ENCODE measurements at regions of chr6 and their contacts with region 1.

Region 1: GRCh38 chr6:27838058-27838944 is 73.9 kb downstream of the OR2B2 start:
- DNase-seq: peak; percentile 61 to 98 (median 74)
- ATAC-seq: peak; percentile 70
- H3K4me3 ChIP-seq: peak overlapping the region; percentile 64 to 76
- H3K4me3 Mint-ChIP-seq: no peak overlapping the region
- H3K27ac ChIP-seq: peak overlapping the region; percentile 91 to 98
- H3K27ac Mint-ChIP-seq: no peak overlapping the region
- H3K4me1 ChIP-seq: peaks cover 35% of the 10 kb centered on the region
- H3K4me1 Mint-ChIP-seq: peaks cover 21% of the 10 kb centered on the region
- H3K27me3 ChIP-seq: peaks cover 0 to 4% of the 10 kb centered on the region in 2 experiments
- H3K27me3 Mint-ChIP-seq: peaks cover 7% of the 10 kb centered on the region
- CTCF ChIP-seq: no peak

Region 2: GRCh38 chr6:26045065-26045927 is 1793.0 kb before region 1 on chr6:
- CTCF ChIA-PET with region 1: no interaction called
- POLR2A ChIA-PET with region 1: interaction called, 15 read pairs
- intact Hi-C with region 1: no loop called
- DNase-seq: peak; percentile 54 to 93 (median 79)
- ATAC-seq: peak; percentile 59
- H3K4me3 ChIP-seq: peak overlapping the region; percentile 67 to 76
- H3K4me3 Mint-ChIP-seq: peak overlapping the region; percentile 89
- H3K27ac ChIP-seq: peak overlapping the region; percentile 73 to 81
- H3K27ac Mint-ChIP-seq: peak overlapping the region; percentile 98
- H3K4me1 ChIP-seq: peaks cover 7% of the 10 kb centered on the region
- H3K4me1 Mint-ChIP-seq: peaks cover 14% of the 10 kb centered on the region
- H3K27me3 ChIP-seq: no peaks in the 10 kb centered on the region
- H3K27me3 Mint-ChIP-seq: no peaks in the 10 kb centered on the region
- CTCF ChIP-seq: no peak

Region 3: GRCh38 chr6:26234421-26235296 is 1603.6 kb before region 1 on chr6:
- CTCF ChIA-PET with region 1: no interaction called
- POLR2A ChIA-PET with region 1: interaction called, 20 read pairs
- intact Hi-C with region 1: no loop called
- DNase-seq: peak; percentile 55 to 88 (median 66)
- ATAC-seq: peak; percentile 63
- H3K4me3 ChIP-seq: peak overlapping the region; percentile 66 to 76
- H3K4me3 Mint-ChIP-seq: peak overlapping the region; percentile 85
- H3K27ac ChIP-seq: peak overlapping the region; percentile 84 to 92
- H3K27ac Mint-ChIP-seq: peak overlapping the region; percentile 93
- H3K4me1 ChIP-seq: peaks cover 14% of the 10 kb centered on the region
- H3K4me1 Mint-ChIP-seq: peaks cover 31% of the 10 kb centered on the region
- H3K27me3 ChIP-seq: no peaks in the 10 kb centered on the region
- H3K27me3 Mint-ChIP-seq: no peaks in the 10 kb centered on the region
- CTCF ChIP-seq: no peak

Region 4: GRCh38 chr6:27138837-27139755 is 699.2 kb before region 1 on chr6:
- CTCF ChIA-PET with region 1: no interaction called
- POLR2A ChIA-PET with region 1: interaction called, 37 read pairs
- intact Hi-C with region 1: no loop called
- DNase-seq: peak in 8 of 9 experiments; percentile 38 to 91 (median 60)
- ATAC-seq: peak; percentile 77
- H3K4me3 ChIP-seq: peak overlapping the region; percentile 77 to 85
- H3K4me3 Mint-ChIP-seq: peak overlapping the region; percentile 96
- H3K27ac ChIP-seq: peak overlapping the region; percentile 82 to 93
- H3K27ac Mint-ChIP-seq: peak overlapping the region; percentile 99
- H3K4me1 ChIP-seq: peaks cover 33% of the 10 kb centered on the region
- H3K4me1 Mint-ChIP-seq: peaks cover 50% of the 10 kb centered on the region
- H3K27me3 ChIP-seq: no peaks in the 10 kb centered on the region
- H3K27me3 Mint-ChIP-seq: no peaks in the 10 kb centered on the region
- CTCF ChIP-seq: no peak

Region 5: DNA sequence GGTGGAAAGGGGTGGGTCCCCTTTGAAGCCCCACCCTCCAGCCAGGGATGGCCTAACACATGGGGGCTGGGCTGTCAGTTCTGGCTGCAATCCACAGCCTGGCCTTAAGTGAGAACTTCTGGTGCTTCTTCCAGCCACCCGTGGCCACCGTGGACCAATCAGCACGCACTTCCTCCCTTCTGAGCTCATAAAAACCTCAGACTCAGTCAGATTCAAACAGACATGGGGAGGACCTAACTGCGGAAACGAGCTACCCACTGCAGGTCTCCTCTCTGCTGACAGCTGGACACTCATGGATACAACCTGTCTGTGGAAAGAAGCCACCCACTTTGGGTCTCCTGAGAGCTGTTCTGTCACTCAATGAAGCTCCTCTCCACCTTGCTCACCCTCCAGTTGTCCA is 470.1 kb before region 1 on chr6:
- CTCF ChIA-PET with region 1: no interaction called
- POLR2A ChIA-PET with region 1: no interaction called
- intact Hi-C with region 1: no loop called
- DNase-seq: no peak
- ATAC-seq: no peak
- H3K4me3 ChIP-seq: no peak overlapping the region
- H3K4me3 Mint-ChIP-seq: no peak overlapping the region
- H3K27ac ChIP-seq: no peak overlapping the region
- H3K27ac Mint-ChIP-seq: no peak overlapping the region
- H3K4me1 ChIP-seq: no peaks in the 10 kb centered on the region
- H3K4me1 Mint-ChIP-seq: no peaks in the 10 kb centered on the region
- H3K27me3 ChIP-seq: no peaks in the 10 kb centered on the region
- H3K27me3 Mint-ChIP-seq: no peaks in the 10 kb centered on the region
- CTCF ChIP-seq: no peak

Region 6: DNA sequence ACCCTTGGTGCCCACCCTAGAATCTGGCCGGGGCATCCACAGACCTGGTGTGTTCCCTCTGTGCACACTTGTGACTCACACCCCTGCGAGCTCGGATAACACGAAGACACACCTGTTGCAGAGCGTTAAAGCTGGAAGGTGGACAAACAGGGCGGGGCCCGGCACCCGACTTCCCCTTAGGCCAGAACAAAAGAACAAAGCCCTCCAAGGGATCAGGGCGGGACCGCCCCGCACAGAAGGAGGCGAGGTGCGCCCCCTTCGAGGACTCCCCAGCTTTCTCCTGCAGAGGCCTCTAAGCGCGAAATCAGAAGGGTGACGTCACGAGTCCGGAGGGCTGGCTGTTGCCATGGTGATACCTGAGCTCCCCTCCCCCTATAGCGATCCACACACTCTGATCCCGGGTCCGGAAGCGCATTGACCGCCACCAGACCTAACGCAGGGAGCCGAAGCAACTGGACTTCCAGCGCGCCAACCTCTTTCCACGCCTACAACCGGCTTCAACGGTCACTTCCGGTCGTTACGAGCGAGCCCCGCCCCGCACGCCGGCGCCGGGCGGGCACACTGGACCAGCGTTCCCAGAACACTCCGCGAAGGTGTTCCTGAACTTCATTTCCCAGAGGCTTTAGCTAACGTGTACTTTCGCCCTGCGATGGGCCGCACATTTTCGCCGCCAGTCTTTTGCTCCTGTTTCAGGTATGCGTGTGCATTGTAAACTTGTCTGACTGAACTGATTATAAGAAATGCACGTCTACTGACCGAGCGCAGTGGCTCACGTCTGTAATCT is 365.5 kb before region 1 on chr6 and contains the start of gene ZNF184:
- CTCF ChIA-PET with region 1: no interaction called
- POLR2A ChIA-PET with region 1: interaction called, 25 read pairs
- intact Hi-C with region 1: loop called in 1 of 2 experiments (anchors 10 kb)
- DNase-seq: peak; percentile 71 to 94 (median 84)
- ATAC-seq: peak; percentile 63
- H3K4me3 ChIP-seq: peak within 1 kb of the TSS; percentile 80 to 90
- H3K4me3 Mint-ChIP-seq: peak within 1 kb of the TSS; percentile 96
- H3K27ac ChIP-seq: peak within 1 kb of the TSS; percentile 94 to 96
- H3K27ac Mint-ChIP-seq: peak within 1 kb of the TSS; percentile 96
- H3K4me1 ChIP-seq: peaks cover 26% of the 10 kb centered on the region
- H3K4me1 Mint-ChIP-seq: peaks cover 48% of the 10 kb centered on the region
- H3K27me3 ChIP-seq: no peaks in the 10 kb centered on the region
- H3K27me3 Mint-ChIP-seq: no peaks in the 10 kb centered on the region
- CTCF ChIP-seq: no peak
- total RNA-seq, gene ZNF184: 31.8 to 32.9 TPM

Region 7: GRCh38 chr6:27547157-27548075 is 290.9 kb before region 1 on chr6:
- CTCF ChIA-PET with region 1: no interaction called
- POLR2A ChIA-PET with region 1: no interaction called
- intact Hi-C with region 1: no loop called
- DNase-seq: no peak
- ATAC-seq: no peak
- H3K4me3 ChIP-seq: no peak overlapping the region
- H3K4me3 Mint-ChIP-seq: no peak overlapping the region
- H3K27ac ChIP-seq: no peak overlapping the region
- H3K27ac Mint-ChIP-seq: no peak overlapping the region
- H3K4me1 ChIP-seq: no peaks in the 10 kb centered on the region
- H3K4me1 Mint-ChIP-seq: peaks cover 15% of the 10 kb centered on the region
- H3K27me3 ChIP-seq: peaks cover 34 to 59% of the 10 kb centered on the region in 2 experiments
- H3K27me3 Mint-ChIP-seq: peaks cover 83% of the 10 kb centered on the region
- CTCF ChIP-seq: no peak

Region 8: DNA sequence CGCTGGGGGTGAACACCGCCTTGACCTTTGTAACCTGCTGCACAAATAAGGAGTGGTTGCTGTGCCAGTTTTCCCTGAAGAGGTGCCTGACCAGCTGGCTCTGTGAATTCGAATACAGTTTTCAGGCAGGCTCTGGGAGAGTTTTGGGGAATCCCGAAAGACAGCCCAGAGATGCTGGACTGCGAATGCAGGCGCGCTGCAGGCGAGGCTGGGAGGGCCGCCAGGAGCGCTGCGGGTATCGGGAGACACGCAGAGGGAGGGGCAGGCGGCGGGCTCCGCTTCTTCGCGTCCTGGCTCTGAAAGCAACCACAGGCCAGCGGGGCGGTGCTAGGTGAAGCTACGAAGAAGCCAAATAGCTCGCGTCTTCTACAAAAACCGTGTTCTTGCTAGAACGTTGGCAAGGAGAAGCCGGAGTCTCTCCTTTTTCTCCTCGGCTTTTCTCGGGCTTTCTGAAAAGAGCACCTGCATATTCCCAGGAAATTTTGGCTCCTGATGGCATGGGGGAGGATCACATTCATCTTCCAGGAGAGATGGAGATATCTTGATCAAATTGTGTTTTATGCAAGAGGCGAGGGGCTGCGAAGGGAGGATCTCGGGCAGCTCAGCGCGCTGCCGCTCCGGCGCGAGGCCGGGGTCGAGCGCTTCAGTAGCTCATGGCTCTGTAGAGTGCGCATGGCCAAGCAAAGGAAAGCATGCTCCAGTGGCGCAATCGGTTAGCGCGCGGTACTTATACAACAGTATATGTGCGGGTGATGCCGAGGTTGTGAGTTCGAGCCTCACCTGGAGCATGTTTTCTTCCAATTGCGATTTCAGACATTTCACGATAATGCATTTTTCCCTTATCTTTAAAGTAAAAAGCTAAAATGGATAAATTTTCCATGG is 207.3 kb before region 1 on chr6:
- CTCF ChIA-PET with region 1: no interaction called
- POLR2A ChIA-PET with region 1: no interaction called
- intact Hi-C with region 1: no loop called
- DNase-seq: peak in 2 of 9 experiments; percentile 8 to 11
- ATAC-seq: no peak
- H3K4me3 ChIP-seq: peak overlapping the region in 1 of 2 experiments; percentile 37
- H3K4me3 Mint-ChIP-seq: peak overlapping the region; percentile 72
- H3K27ac ChIP-seq: no peak overlapping the region
- H3K27ac Mint-ChIP-seq: no peak overlapping the region
- H3K4me1 ChIP-seq: peaks cover 8% of the 10 kb centered on the region
- H3K4me1 Mint-ChIP-seq: peaks cover 14% of the 10 kb centered on the region
- H3K27me3 ChIP-seq: peaks cover 7 to 21% of the 10 kb centered on the region in 2 experiments
- H3K27me3 Mint-ChIP-seq: peaks cover 71% of the 10 kb centered on the region
- CTCF ChIP-seq: no peak

Region 9: DNA sequence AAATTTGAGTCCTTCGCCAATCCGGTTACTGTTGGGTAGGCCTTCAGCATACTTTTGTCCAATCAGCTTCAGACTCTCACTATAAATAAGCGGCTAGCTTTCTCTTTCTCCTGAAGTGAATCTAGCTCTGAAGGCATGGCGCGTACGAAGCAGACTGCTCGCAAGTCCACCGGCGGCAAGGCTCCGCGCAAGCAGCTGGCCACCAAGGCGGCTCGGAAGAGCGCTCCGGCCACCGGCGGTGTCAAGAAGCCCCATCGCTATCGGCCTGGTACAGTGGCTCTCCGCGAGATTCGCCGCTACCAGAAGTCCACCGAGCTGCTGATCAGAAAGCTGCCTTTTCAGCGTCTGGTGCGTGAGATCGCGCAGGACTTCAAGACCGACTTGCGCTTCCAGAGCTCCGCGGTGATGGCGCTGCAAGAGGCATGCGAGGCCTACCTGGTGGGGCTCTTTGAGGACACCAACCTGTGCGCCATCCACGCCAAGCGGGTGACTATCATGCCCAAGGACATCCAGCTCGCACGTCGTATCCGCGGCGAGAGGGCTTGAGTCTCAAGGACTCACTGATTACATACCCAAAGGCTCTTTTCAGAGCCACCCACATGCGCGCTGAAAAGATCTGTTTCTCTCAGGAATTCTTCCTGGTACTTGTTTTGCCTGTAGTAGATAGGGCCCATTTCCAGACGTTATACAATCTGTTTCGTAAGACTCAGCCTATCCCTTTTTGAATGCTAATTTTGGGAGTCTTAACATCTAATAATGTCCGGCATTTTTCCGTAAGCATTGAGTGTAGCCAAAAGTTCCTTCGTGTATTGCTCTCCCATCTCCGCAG is 28.1 kb before region 1 on chr6:
- CTCF ChIA-PET with region 1: interaction called, 12 read pairs
- POLR2A ChIA-PET with region 1: interaction called, 361 read pairs
- intact Hi-C with region 1: loop called (anchors 1 to 2 kb)
- DNase-seq: peak; percentile 63 to 96 (median 74)
- ATAC-seq: peak; percentile 60
- H3K4me3 ChIP-seq: peak overlapping the region; percentile 52 to 65
- H3K4me3 Mint-ChIP-seq: peak overlapping the region; percentile 95
- H3K27ac ChIP-seq: peak overlapping the region; percentile 83 to 87
- H3K27ac Mint-ChIP-seq: peak overlapping the region; percentile 99
- H3K4me1 ChIP-seq: peaks cover 36% of the 10 kb centered on the region
- H3K4me1 Mint-ChIP-seq: peaks cover 57% of the 10 kb centered on the region
- H3K27me3 ChIP-seq: no peaks in the 10 kb centered on the region
- H3K27me3 Mint-ChIP-seq: no peaks in the 10 kb centered on the region
- CTCF ChIP-seq: no peak

Region 10: DNA sequence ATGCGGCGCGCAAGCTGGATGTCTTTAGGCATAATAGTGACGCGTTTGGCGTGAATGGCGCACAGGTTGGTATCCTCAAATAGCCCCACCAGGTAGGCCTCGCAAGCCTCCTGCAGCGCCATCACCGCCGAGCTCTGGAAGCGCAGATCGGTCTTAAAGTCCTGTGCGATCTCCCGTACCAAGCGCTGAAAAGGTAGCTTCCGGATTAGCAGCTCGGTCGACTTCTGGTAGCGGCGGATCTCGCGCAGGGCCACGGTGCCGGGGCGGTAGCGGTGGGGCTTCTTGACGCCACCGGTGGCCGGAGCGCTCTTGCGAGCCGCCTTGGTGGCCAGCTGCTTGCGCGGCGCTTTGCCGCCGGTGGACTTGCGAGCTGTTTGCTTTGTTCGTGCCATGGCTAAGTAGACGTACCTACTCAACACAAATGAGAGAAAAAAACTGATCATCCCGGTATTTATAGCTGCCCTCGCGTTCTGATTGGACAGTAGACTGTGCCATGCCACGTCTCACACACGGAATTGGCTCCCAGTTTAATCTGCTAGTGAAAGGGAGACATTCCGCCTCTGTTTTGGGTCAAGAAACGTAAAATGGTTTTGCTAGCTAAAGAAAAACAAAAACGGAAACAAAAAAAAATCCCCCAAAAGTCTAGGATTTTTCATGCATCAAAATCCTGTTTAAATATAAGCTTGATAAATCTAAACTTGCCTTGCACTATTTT is 33.8 kb after region 1 on chr6:
- CTCF ChIA-PET with region 1: interaction called, 31 read pairs
- POLR2A ChIA-PET with region 1: interaction called, 746 read pairs
- intact Hi-C with region 1: loop called (anchors 1 to 2 kb)
- DNase-seq: peak; percentile 72 to 97 (median 85)
- ATAC-seq: peak; percentile 75
- H3K4me3 ChIP-seq: peak overlapping the region; percentile 54 to 67
- H3K4me3 Mint-ChIP-seq: peak overlapping the region; percentile 82
- H3K27ac ChIP-seq: peak overlapping the region; percentile 81 to 86
- H3K27ac Mint-ChIP-seq: peak overlapping the region; percentile 98
- H3K4me1 ChIP-seq: peaks cover 20% of the 10 kb centered on the region
- H3K4me1 Mint-ChIP-seq: peaks cover 36% of the 10 kb centered on the region
- H3K27me3 ChIP-seq: peaks cover 0 to 3% of the 10 kb centered on the region in 2 experiments
- H3K27me3 Mint-ChIP-seq: no peaks in the 10 kb centered on the region
- CTCF ChIP-seq: peak; percentile 48